HAP-1 (cell line): ENCODE measurements at regions of chr14 and their contacts with region 1.

Region 1: DNA sequence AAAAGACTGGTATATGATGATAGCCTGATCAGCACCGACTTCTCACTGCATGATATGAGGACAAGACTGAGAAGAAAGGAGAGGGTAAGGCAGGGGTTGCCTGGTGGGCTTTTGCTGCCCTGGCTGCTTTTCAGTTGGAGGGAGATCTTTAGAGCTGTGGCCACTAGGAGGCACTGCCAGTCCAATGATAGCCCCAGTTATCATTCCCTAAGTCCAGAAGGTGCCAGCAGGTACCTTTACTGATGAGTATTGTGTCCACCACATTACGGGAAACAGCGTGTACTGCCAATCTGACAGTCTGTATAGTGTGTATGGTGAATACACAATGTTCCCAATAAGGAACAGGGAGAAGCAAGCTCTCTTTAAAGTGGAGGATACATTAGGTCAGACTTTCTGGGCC is 55.8 kb upstream of the CCDC175 start:
- DNase-seq: peak in 1 of 2 experiments; percentile 40
- H3K4me3 ChIP-seq: no peak overlapping the region
- H3K4me1 ChIP-seq: no peaks in the 10 kb centered on the region
- H3K27me3 ChIP-seq: 0 out of 2 replicates have a peak, but pooled peaks cover 4% of the 10 kb centered on the region

Region 2: DNA sequence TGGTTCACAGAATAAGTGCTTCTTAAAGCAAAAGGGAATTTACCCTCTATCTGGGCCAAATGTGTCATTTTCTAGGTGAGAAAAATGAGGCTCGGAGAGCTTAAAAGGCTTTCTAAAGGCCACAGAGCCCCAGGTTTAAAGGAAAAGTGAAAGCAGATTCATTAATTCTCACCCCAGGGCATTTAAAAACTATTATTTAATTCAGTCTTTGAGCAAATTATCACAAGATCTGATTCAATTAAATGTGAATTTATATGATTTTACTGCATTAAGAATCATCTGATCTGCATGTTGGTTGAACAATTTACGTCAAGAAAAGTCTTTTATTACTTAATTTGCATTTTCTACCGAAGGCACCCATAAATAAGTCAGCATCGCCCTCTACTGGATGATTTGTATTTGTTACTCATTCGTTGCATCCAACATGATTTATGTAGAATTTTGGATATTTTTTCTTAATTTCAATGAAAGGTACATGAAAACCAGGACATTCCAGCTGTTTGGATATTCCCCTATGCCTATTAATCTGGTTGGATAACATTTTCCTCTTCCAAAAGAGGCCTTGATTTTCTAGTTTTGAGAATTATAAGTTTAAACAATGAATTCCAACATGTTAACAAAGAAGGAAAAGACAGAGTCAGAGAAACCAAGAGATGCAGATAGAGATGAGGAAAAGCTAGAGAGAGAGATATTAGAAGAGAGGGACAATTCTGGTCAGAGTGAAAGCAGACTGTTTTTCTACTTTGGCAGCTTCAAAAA is 551.9 kb after region 1 on chr14:
- in situ Hi-C with region 1: loop called (anchors 25 kb)
- DNase-seq: peak; percentile 51 to 69
- H3K4me3 ChIP-seq: no peak overlapping the region
- H3K4me1 ChIP-seq: 0 out of 2 replicates have a peak, but pooled peaks cover 4% of the 10 kb centered on the region
- H3K27me3 ChIP-seq: no peaks in the 10 kb centered on the region